GM10248 (cell line): ENCODE measurements at regions of chr11 and their contacts with region 1.

Region 1: GRCh38 chr11:118051611-118052461 is 25.0 kb upstream of the TMPRSS4 start:
- DNase-seq: no peak
- CTCF ChIP-seq: no peak

Region 2: DNA sequence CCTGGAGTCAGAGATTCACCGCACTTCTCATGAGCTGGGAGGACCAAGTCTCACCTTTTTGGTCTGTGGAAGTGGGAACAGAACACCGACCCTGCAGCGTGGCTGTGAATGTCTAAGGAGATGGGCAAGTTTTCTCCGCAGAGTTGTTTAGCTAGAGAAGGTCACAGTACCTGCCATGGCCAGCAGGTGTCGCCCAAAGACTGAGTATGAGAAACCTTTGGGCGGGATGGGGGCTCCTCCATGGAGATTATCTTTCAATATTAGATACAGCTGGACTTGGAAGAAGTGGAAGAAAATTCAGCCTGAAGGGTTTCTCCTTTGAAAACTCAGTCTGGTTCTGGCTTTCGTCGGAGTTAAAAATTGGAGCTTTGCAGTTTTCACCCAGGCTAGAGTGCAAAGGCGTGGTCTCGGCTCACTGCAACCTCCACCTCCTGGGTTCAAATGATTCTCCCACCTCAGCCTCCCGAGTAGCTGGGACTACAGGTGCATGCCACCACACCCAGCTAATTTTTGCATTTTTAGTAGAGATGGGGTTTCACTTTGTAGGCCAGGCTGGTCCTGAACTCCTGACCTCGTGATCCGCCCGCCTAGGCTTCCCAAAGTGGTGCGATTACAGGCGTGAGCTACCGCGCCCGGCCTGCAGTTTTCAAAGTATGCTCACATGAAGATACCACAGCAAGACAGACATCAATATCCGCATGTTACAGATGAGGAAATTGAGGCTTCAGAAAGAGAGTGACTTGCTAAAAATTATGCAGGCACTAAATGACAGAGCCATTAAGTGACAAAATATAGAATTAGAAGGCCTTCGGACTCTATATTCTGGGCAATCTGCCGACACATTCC is 244.1 kb before region 1 on chr11:
- CTCF ChIA-PET with region 1: interaction called, 116 read pairs
- POLR2A ChIA-PET with region 1: no interaction called
- DNase-seq: peak; percentile 78
- CTCF ChIP-seq: peak; percentile 87

Region 3: DNA sequence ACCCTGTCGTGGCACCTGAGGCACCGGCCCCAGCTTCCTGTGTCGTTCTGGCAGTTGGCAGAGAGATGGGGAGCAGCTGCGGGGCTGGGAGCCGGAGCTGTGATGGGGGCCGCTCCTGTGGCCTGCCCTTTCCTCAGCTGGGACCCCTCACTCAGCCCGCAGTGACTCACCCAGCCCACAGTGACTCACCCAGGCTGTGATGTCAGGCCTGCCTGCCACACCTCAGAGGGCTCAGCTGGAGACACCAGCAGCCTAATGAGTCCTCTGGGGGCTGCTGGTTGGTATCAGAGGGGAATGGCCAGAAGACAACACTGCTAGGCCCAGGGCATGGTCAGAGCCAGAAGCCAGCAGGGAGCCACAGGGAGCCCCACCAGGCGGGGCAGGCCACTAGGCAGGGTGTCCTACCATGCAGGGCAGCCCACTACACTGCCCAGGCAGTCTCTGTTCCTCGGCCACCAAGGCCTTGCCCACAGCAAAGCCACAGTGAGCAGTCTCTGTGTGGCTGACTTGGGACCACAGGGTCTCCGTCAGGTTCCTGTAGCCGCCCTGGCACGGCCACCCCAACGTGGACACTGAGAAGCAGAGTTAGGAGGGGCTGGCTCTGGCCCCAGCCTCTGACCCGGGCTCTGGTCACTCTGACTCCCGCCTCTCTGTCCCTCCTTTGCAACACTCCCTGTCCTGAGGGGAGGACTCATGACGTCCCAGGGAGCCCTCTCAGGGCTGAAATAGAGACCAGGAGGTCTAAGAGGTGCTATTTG is 223.0 kb before region 1 on chr11:
- CTCF ChIA-PET with region 1: interaction called, 34 read pairs
- POLR2A ChIA-PET with region 1: no interaction called
- DNase-seq: peak; percentile 76
- CTCF ChIP-seq: no peak

Region 4: GRCh38 chr11:117932067-117932370 is 119.8 kb before region 1 on chr11:
- CTCF ChIA-PET with region 1: interaction called, 13 read pairs
- POLR2A ChIA-PET with region 1: no interaction called
- DNase-seq: peak; percentile 75
- CTCF ChIP-seq: no peak

Region 5: DNA sequence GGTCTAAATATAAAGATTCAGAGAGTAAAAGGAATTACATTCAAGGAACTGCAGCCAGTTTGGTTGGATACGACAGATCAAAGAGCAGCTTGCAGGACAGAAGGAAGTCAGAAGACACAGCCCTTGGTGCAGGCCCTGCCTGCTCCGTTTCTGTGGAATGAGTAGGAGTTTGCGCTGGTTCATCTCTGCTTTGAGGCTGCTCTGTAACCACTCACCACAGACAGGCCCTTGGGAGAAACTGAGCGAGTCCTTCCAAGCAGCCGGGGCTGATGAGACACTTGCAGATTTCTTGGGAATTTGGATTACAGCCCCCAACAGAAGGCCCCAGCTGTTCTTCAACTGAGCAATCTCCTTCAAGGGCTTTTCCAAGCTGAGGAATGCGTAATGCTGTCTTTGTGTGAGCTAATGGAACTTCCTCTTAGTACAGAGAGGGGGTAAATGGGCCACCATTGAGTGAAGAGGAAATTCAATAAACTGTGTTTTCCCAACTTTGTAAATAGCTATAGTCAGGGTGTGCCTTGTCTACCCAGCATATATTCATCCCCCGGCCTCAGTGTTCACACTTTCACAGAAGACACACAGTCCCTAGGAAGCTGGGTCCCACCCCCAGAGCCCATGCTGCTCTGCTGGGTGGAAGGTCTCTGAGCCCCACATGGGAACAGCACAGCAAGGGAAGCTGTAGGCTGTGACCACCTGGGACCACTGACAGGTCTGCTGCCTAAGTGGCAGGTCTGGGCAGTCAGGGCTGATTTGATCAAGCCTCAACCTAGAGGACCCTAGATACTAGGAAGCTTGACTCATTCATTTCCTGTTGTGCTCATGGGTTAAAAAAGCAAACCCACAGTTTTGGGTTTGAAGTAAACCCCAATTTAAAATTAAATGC is 49.1 kb before region 1 on chr11:
- CTCF ChIA-PET with region 1: interaction called, 27 read pairs
- POLR2A ChIA-PET with region 1: no interaction called
- DNase-seq: no peak
- CTCF ChIP-seq: no peak

Region 6: GRCh38 chr11:118021146-118021545 is 30.7 kb before region 1 on chr11:
- CTCF ChIA-PET with region 1: interaction called, 10 read pairs
- POLR2A ChIA-PET with region 1: no interaction called
- DNase-seq: no peak
- CTCF ChIP-seq: no peak

Region 7: DNA sequence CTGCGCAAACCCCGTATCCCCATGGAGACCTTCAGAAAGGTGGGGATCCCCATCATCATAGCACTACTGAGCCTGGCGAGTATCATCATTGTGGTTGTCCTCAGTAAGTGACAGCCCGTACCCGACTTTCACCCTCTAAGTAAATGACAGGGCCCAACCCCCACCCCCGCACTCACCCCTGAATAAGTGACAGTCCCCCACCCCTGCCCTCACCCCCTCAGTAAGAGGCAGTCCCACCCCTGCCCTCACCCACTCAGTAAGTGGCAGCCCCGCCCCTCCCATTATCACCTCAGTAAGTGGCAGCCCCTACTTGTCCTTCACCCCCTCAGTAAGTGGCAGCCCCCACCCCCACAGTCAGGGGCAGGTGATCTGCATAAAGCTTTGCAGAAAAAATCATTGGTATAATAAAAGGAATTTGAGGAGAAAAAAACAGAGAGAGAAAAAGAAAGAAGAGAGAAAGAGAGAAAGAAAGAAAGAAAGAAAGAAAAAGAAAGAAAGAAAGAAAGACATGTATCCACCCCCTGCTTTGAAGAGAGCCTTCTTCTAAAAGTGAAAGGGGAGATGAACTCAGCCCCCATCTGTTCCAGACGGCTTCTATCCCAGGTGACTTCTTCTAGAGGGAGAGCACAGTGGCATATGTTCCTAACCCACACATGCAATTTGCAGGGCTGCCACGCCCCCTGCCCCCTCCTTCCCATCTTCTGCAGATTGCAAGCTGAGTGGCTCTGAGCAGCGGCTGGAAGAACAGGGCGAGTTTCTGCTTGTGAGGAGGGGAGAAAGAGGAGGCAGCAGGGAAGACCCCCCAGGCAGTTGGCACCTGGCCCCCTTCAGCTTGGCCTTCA is 47.4 kb after region 1 on chr11:
- CTCF ChIA-PET with region 1: no interaction called
- POLR2A ChIA-PET with region 1: no interaction called
- DNase-seq: no peak
- CTCF ChIP-seq: no peak